ENCODE measurements at regions of chr4 and their contacts with region 1.

Region 1: GRCh38 chr4:121900132-121900983 is 30.1 kb upstream of the BBS7 start:
- DNase-seq: no peak
- ATAC-seq: peak; percentile 56
- H3K4me3 Mint-ChIP-seq: no peak overlapping the region
- H3K27ac Mint-ChIP-seq: no peak overlapping the region
- H3K4me1 Mint-ChIP-seq: peaks cover 4% of the 10 kb centered on the region
- H3K27me3 Mint-ChIP-seq: peaks cover 11% of the 10 kb centered on the region
- CTCF ChIP-seq: no peak

Region 2: DNA sequence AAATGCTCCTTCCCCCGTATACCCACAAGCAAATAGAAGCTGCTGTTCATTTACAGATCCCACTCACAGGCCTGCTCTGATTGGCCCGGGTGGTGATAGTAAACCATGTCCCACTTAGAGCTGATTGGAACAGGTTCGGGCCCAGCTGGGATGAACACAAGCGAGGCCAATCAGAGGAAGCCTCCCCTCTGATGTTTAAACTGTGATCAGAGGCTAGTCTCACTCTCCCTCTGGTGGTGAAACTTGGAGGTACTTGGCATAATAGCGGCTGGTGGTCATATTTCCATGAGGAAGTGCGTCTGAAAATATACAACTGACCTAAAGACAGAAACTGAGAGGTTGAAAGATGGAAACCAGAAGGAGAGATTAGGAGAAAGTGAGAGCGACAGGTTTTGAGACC is 103.0 kb after region 1 on chr4:
- CTCF ChIA-PET with region 1: interaction called, 36 read pairs
- POLR2A ChIA-PET with region 1: no interaction called
- intact Hi-C with region 1: loop called (anchors 1 kb)
- DNase-seq: no peak
- ATAC-seq: peak; percentile 75
- H3K4me3 Mint-ChIP-seq: no peak overlapping the region
- H3K27ac Mint-ChIP-seq: no peak overlapping the region
- H3K4me1 Mint-ChIP-seq: no peaks in the 10 kb centered on the region
- H3K27me3 Mint-ChIP-seq: peaks cover 12% of the 10 kb centered on the region
- CTCF ChIP-seq: no peak

Region 3: DNA sequence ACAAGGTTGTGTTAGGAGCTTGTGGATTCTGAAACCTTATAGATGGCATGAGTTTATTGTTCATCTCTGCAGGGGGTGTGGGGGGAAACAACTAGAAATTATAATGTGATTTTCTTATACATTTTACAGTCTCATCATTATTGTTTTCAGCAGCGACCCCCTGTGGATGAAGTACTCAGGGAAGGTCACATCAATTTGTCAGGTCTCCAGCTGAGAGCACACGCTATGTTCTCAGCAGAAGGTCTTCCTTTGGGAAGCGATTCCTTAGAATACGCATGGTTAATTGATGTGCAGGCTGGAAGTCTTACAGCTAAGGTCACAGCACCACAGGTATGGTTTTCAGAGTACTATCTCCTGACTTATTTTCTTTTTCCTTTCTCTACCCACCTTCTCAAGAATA is 324.0 kb after region 1 on chr4:
- CTCF ChIA-PET with region 1: interaction called, 9 read pairs
- POLR2A ChIA-PET with region 1: no interaction called
- intact Hi-C with region 1: loop called (anchors 1 kb)
- DNase-seq: no peak
- ATAC-seq: no peak
- H3K4me3 Mint-ChIP-seq: no peak overlapping the region
- H3K27ac Mint-ChIP-seq: no peak overlapping the region
- H3K4me1 Mint-ChIP-seq: no peaks in the 10 kb centered on the region
- H3K27me3 Mint-ChIP-seq: no peaks in the 10 kb centered on the region
- CTCF ChIP-seq: no peak

Region 4: DNA sequence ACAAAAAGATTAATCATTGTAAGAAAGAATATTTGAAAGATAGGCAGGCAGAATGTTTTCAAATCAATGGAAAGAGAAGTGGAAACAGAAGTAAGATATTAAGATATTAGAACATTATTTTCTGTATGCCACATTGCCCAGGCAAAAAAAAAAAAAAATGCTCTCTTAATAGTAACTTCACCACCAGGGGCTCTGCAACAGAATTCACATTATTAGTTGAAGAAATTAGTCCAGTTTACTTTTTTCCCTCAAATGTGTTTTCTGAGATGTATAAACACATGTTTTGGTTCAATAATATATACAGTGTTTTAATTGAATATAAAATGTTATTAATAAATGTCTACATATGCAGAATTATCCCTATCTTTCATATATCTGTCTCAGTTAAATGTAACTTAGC is 400.4 kb after region 1 on chr4:
- CTCF ChIA-PET with region 1: no interaction called
- POLR2A ChIA-PET with region 1: no interaction called
- intact Hi-C with region 1: loop called (anchors 5 kb)
- DNase-seq: no peak
- ATAC-seq: no peak
- H3K4me3 Mint-ChIP-seq: no peak overlapping the region
- H3K27ac Mint-ChIP-seq: no peak overlapping the region
- H3K4me1 Mint-ChIP-seq: no peaks in the 10 kb centered on the region
- H3K27me3 Mint-ChIP-seq: no peaks in the 10 kb centered on the region
- CTCF ChIP-seq: no peak

Region 5: GRCh38 chr4:122577808-122578781 is 677.7 kb after region 1 on chr4:
- CTCF ChIA-PET with region 1: interaction called, 40 read pairs
- POLR2A ChIA-PET with region 1: no interaction called
- intact Hi-C with region 1: no loop called
- DNase-seq: no peak
- ATAC-seq: peak; percentile 54
- H3K4me3 Mint-ChIP-seq: no peak overlapping the region
- H3K27ac Mint-ChIP-seq: no peak overlapping the region
- H3K4me1 Mint-ChIP-seq: no peaks in the 10 kb centered on the region
- H3K27me3 Mint-ChIP-seq: peaks cover 7% of the 10 kb centered on the region
- CTCF ChIP-seq: peak; percentile 68

Region 6: GRCh38 chr4:122716825-122717448 is 816.6 kb after region 1 on chr4:
- CTCF ChIA-PET with region 1: interaction called, 9 read pairs
- POLR2A ChIA-PET with region 1: no interaction called
- intact Hi-C with region 1: loop called (anchors 1 kb)
- DNase-seq: no peak
- ATAC-seq: peak; percentile 82
- H3K4me3 Mint-ChIP-seq: no peak overlapping the region
- H3K27ac Mint-ChIP-seq: no peak overlapping the region
- H3K4me1 Mint-ChIP-seq: no peaks in the 10 kb centered on the region
- H3K27me3 Mint-ChIP-seq: peaks cover 7% of the 10 kb centered on the region
- CTCF ChIP-seq: no peak

Measured in activated B cell treated with CpG ODN at 0.5 μM for 24 hours (primary cell).